ENCODE measurements at regions of chr1 and their contacts with region 1.

Region 1: DNA sequence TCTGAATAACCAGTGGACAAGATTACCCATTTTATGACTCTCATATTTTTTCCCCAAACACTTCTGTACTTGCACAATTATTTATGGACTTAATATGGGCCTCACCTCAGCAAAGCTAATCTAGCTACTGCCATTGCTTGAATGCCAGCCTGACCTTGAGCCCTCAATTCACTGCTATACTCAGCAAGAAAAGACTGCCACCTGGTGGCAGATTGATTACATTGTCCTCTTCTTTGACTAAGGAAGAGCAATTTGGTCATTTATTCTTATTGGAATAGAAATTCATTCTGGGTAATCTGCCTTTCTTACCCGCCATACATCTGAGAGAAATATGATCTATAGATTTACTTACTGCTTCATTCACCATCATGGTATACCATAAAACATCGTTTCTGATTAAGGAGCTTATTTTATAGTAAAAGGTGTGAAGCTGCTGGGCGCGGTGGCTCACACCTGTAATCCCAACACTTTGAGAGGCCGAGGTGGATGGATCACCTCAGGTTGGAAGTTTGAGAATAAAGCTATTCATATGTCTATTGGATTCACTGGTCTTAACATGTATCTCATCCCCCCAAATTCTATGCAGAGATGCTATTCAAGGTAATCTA is 32.9 kb upstream of the DIPK1A start:
- DNase-seq: peak in 33 of 35 experiments; percentile 16 to 91 (median 66)
- ATAC-seq: peak; percentile 76 to 87 (median 81)
- H3K4me3 ChIP-seq: no peak overlapping the region
- H3K4me3 Mint-ChIP-seq: no peak overlapping the region
- H3K27ac ChIP-seq: no peak overlapping the region
- H3K27ac Mint-ChIP-seq: peak overlapping the region; percentile 36 to 53
- H3K4me1 ChIP-seq: peaks cover 34 to 36% of the 10 kb centered on the region in 2 experiments
- H3K4me1 Mint-ChIP-seq: peaks cover 45 to 46% (median 45%) of the 10 kb centered on the region in 3 donors
- H3K27me3 ChIP-seq: no peaks in the 10 kb centered on the region
- H3K27me3 Mint-ChIP-seq: no peaks in the 10 kb centered on the region

Region 2: GRCh38 chr1:92858564-92859399 is 135.4 kb before region 1 on chr1:
- CTCF ChIA-PET with region 1: interaction called, 75 to 80 read pairs
- POLR2A ChIA-PET with region 1: interaction called in 1 of 2 experiments, 4 read pairs
- DNase-seq: peak in 30 of 35 experiments; percentile 3 to 87 (median 40)
- ATAC-seq: peak; percentile 88 to 93 (median 91)
- H3K4me3 ChIP-seq: no peak overlapping the region
- H3K4me3 Mint-ChIP-seq: peak overlapping the region; percentile 44 to 57 (median 49)
- H3K27ac ChIP-seq: no peak overlapping the region
- H3K27ac Mint-ChIP-seq: peak overlapping the region; percentile 59 to 82
- H3K4me1 ChIP-seq: peaks cover 7 to 8% of the 10 kb centered on the region in 2 experiments
- H3K4me1 Mint-ChIP-seq: peaks cover 20 to 27% (median 23%) of the 10 kb centered on the region in 3 donors
- H3K27me3 ChIP-seq: no peaks in the 10 kb centered on the region
- H3K27me3 Mint-ChIP-seq: no peaks in the 10 kb centered on the region

Region 3: DNA sequence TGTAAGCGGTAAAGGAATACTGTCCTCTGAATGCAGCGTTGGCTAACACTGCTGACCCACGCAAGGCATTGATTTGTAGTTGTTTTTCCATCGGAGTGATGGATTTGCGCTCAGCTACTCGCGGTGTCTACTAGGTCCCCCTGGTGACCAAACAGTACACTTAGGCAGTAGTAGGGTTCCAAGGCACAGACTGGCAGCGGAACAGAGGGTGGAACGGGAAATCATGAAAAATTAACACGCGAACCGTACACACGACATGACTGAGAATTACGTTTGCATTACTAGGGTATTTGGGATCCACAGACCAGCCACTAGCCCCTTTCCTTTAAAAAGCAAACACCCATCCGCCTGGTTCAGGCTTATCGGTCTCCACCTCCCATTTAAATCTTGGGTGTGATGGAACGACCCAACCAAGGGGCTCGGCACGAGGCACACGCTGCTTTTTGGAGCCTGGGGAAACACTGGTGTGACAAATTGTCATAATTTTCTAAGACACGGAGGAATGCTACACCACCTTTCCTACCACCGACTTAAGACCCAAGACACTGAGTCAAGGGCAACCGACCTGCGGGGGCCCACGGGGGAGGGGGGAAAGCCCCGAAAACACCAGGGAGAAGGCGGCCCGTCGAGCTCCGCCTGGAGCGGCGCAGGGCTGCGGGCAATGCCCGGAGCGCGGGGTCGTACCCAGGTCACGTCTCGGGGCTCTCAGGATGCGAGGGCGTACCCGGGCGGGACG is 33.6 kb before region 1 on chr1:
- CTCF ChIA-PET with region 1: interaction called, 62 to 82 read pairs
- POLR2A ChIA-PET with region 1: interaction called, 4 to 12 read pairs
- DNase-seq: peak; percentile 42 to 86 (median 58)
- ATAC-seq: peak; percentile 43 to 57 (median 49)
- H3K4me3 ChIP-seq: peak overlapping the region; percentile 78 to 81
- H3K4me3 Mint-ChIP-seq: peak overlapping the region in 2 of 3 donors; percentile 89 to 95
- H3K27ac ChIP-seq: peak overlapping the region; percentile 84
- H3K27ac Mint-ChIP-seq: peak overlapping the region; percentile 95 to 97
- H3K4me1 ChIP-seq: peaks cover 51 to 60% of the 10 kb centered on the region in 2 experiments
- H3K4me1 Mint-ChIP-seq: peaks cover 39 to 46% (median 44%) of the 10 kb centered on the region in 3 donors
- H3K27me3 ChIP-seq: no peaks in the 10 kb centered on the region
- H3K27me3 Mint-ChIP-seq: no peaks in the 10 kb centered on the region

Region 4: GRCh38 chr1:92975551-92976232 is 18.5 kb before region 1 on chr1:
- CTCF ChIA-PET with region 1: interaction called, 17 to 82 read pairs
- POLR2A ChIA-PET with region 1: interaction called, 3 to 5 read pairs
- DNase-seq: no peak
- ATAC-seq: peak in 1 of 4 experiments; percentile 32
- H3K4me3 ChIP-seq: no peak overlapping the region
- H3K4me3 Mint-ChIP-seq: no peak overlapping the region
- H3K27ac ChIP-seq: peak overlapping the region; percentile 9
- H3K27ac Mint-ChIP-seq: peak overlapping the region; percentile 58 to 88
- H3K4me1 ChIP-seq: peaks cover 23 to 35% of the 10 kb centered on the region in 2 experiments
- H3K4me1 Mint-ChIP-seq: peaks cover 43 to 60% (median 48%) of the 10 kb centered on the region in 3 donors
- H3K27me3 ChIP-seq: no peaks in the 10 kb centered on the region
- H3K27me3 Mint-ChIP-seq: no peaks in the 10 kb centered on the region

Region 5: DNA sequence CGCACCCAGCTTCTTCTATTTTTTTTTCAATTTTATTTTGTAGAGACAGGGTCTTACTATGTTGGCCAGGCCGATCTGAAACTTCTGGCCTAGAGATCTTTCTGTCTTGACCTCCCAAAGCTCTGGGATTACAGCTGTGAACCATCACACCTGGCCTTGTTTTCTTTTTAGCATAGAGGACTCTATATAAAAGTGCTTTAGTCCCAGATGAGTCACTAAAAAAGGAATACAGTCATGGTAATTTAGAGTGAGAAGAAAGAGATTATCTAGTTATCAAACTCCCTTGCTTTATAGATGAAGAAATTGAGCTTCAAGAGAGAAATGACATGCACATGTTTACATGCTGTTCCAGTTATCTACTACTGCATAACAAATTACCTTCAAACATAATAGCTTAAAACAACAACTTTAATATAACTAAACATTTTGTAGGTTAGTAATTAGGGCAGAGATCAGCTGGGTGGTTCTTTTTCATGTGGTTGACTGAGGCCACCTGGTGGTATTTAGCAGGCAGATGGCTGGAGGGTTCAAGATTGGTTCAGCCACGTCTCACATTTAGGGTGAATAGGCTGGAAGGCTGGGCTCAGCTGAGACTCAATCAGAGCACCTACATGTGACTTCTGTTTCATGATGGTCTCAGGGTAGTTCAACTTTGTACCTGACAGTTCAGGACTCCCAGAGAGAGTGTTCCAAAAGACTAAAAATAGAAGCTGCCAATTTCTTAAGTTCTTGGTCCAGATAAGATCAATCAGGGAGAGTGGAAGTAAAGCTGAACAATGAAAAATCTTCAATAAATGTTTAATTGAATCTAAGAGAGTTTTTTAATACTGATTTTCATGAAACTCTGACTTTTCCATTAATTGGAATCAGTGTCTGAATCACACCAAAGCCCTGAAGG is 67.9 kb after region 1 on chr1:
- CTCF ChIA-PET with region 1: interaction called in 1 of 2 experiments, 13 read pairs
- POLR2A ChIA-PET with region 1: no interaction called
- DNase-seq: peak in 26 of 35 experiments; percentile 7 to 71 (median 22)
- ATAC-seq: peak; percentile 54 to 86 (median 70)
- H3K4me3 ChIP-seq: no peak overlapping the region
- H3K4me3 Mint-ChIP-seq: no peak overlapping the region
- H3K27ac ChIP-seq: no peak overlapping the region
- H3K27ac Mint-ChIP-seq: no peak overlapping the region
- H3K4me1 ChIP-seq: no peaks in the 10 kb centered on the region
- H3K4me1 Mint-ChIP-seq: peaks cover 0 to 4% (median 0%) of the 10 kb centered on the region in 3 donors
- H3K27me3 ChIP-seq: peaks cover 0 to 3% of the 10 kb centered on the region in 2 experiments
- H3K27me3 Mint-ChIP-seq: peaks cover 6 to 22% of the 10 kb centered on the region in 2 donors

Region 6: DNA sequence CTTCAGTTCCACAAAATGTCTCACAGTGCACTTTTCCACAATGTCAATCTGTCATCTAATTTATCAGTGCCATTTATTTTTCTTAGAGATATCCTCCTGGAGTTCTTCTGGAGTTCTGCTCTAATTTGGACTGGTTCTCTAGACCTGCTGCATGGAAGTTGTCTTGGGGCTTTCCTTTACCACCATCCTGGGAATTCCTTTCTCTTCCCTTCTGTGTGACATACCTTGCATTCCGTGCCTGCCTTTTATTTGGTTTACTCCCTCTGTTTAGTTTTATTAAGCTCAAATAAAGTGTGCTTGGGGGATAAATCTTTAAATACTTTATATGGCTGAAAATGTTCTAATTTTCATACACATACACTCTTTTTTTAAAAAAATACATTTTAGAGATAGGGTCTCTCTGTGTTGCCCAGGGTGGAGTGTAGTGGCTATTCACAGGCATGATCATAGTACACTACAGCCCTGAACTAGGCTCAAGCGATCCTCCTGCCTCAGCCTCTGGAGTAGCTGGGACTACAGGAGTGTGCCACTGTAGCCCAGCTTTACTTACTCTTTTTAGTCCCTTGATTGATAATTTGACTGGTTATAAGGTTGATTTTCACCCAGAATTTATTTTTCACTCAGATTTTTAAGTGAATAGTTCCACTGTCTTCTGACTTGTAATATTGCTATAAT is 99.3 kb after region 1 on chr1:
- CTCF ChIA-PET with region 1: no interaction called
- POLR2A ChIA-PET with region 1: no interaction called
- DNase-seq: no peak
- ATAC-seq: no peak
- H3K4me3 ChIP-seq: no peak overlapping the region
- H3K4me3 Mint-ChIP-seq: peak overlapping the region in 1 of 3 donors; percentile 26
- H3K27ac ChIP-seq: no peak overlapping the region
- H3K27ac Mint-ChIP-seq: no peak overlapping the region
- H3K4me1 ChIP-seq: peaks cover 0 to 10% of the 10 kb centered on the region in 2 experiments
- H3K4me1 Mint-ChIP-seq: peaks cover 73 to 77% (median 76%) of the 10 kb centered on the region in 3 donors
- H3K27me3 ChIP-seq: no peaks in the 10 kb centered on the region
- H3K27me3 Mint-ChIP-seq: no peaks in the 10 kb centered on the region

Measured in T-cell (primary cell).